ENCODE measurements at regions of chr17 and their contacts with region 1.

Region 1: GRCh38 chr17:77331301-77331864 is 190.6 kb downstream of the SEC14L1 start:
- DNase-seq: peak; percentile 92 to 95 (median 94)
- H3K4me3 ChIP-seq: peak overlapping the region; percentile 48 to 57
- H3K4me3 Mint-ChIP-seq: peak overlapping the region; percentile 80 to 90 (median 85)
- H3K27ac ChIP-seq: peak overlapping the region; percentile 43
- H3K27ac Mint-ChIP-seq: peak overlapping the region; percentile 83 to 95 (median 93)
- H3K4me1 ChIP-seq: peaks cover 52% of the 10 kb centered on the region
- H3K4me1 Mint-ChIP-seq: peaks cover 30 to 66% (median 44%) of the 10 kb centered on the region in 4 donors
- H3K27me3 ChIP-seq: no peaks in the 10 kb centered on the region
- H3K27me3 Mint-ChIP-seq: no peaks in the 10 kb centered on the region

Region 2: DNA sequence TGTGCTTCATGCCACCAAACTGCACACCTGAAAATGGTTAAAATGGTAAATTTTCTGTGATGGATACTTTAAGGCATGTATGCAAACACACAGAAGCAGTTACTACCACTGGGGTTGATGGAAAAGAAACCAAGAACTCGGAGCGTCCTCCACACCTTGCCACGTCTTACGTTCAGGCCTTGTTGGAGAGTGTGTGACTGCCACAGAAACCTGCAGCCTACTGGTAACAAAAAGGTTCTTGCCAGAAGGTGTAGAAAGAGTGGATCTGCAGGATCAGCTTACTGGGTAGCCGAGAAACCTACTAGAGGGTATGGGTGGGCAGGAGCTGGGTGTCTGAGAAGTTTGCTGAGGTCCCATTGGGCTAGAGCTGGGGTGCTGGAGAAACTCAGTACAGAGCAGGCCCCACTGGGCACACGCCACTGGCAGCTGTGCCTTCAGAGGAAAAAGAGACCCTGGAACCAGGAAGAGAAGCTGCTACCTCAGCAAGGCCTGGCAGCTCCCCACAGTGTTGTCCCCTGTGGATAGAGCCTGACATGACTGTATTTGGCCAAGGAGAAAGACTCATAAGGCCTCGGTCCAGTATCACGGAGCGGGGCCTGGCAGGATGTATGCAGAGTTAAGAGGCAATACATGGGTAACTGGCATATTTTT is 14.0 kb after region 1 on chr17:
- CTCF ChIA-PET with region 1: interaction called, 11 read pairs
- POLR2A ChIA-PET with region 1: interaction called, 54 read pairs
- intact Hi-C with region 1: loop called (anchors 1 kb)
- DNase-seq: no peak
- H3K4me3 ChIP-seq: no peak overlapping the region
- H3K4me3 Mint-ChIP-seq: peak overlapping the region in 3 of 8 donors; percentile 30 to 57 (median 35)
- H3K27ac ChIP-seq: no peak overlapping the region
- H3K27ac Mint-ChIP-seq: peak overlapping the region in 6 of 7 donors; percentile 53 to 87 (median 78)
- H3K4me1 ChIP-seq: peaks cover 58% of the 10 kb centered on the region
- H3K4me1 Mint-ChIP-seq: peaks cover 39 to 62% (median 52%) of the 10 kb centered on the region in 4 donors
- H3K27me3 ChIP-seq: no peaks in the 10 kb centered on the region
- H3K27me3 Mint-ChIP-seq: no peaks in the 10 kb centered on the region

Region 3: GRCh38 chr17:77382966-77383612 is 51.7 kb after region 1 on chr17:
- CTCF ChIA-PET with region 1: interaction called, 28 read pairs
- POLR2A ChIA-PET with region 1: interaction called, 248 read pairs
- intact Hi-C with region 1: loop called (anchors 2 kb)
- DNase-seq: no peak
- H3K4me3 ChIP-seq: peak overlapping the region in 1 of 2 donors; percentile 41
- H3K4me3 Mint-ChIP-seq: peak overlapping the region; percentile 74 to 94 (median 82)
- H3K27ac ChIP-seq: peak overlapping the region; percentile 50
- H3K27ac Mint-ChIP-seq: peak overlapping the region; percentile 82 to 95 (median 90)
- H3K4me1 ChIP-seq: peaks cover 98% of the 10 kb centered on the region
- H3K4me1 Mint-ChIP-seq: peaks cover 56 to 97% (median 84%) of the 10 kb centered on the region in 4 donors
- H3K27me3 ChIP-seq: no peaks in the 10 kb centered on the region
- H3K27me3 Mint-ChIP-seq: no peaks in the 10 kb centered on the region

Region 4: DNA sequence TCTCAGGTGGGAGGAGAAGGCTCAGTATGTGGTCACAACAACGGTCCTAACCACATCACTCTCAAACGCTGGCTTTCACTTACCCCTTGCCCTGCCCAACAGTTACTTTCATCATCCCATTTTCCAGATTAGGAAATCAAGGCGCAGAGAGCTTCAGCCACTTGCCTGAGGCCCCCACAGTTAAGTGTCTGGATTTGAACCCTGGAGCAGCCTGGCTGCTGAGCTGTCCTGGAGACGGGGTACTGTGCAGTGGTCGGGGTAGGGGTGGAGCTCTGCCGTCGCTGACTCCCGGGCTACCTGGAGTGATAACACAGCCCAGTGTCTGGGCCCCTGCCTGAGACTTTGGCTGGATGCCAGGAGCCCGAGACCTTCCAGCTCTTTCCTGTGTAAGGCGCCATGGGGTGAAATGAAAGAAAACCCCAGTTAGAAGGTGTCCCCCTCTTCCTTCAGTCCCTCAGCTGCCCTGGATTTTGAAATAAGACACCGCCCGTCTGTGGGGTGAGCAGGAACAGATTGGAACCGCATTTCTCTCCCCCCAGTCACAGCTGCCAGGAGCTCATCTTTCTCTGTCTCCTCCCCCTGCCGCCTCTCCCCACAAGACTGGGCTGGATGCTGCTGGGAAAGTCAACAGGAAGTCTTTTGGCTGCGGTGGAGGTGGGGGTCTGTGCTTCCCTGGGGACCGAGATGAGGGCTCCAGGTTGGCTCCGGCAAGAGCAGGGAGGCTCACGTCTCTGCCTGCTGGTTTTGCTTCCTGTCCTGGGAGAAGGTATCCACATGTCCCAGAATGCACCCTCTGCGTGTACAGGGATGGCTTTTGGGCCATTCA is 89.6 kb after region 1 on chr17:
- CTCF ChIA-PET with region 1: interaction called, 16 read pairs
- POLR2A ChIA-PET with region 1: interaction called, 65 read pairs
- intact Hi-C with region 1: no loop called
- DNase-seq: peak; percentile 56 to 83 (median 62)
- H3K4me3 ChIP-seq: peak overlapping the region in 1 of 2 donors; percentile 43
- H3K4me3 Mint-ChIP-seq: peak overlapping the region; percentile 72 to 84 (median 78)
- H3K27ac ChIP-seq: peak overlapping the region; percentile 64
- H3K27ac Mint-ChIP-seq: peak overlapping the region; percentile 93 to 96 (median 96)
- H3K4me1 ChIP-seq: peaks cover 98% of the 10 kb centered on the region
- H3K4me1 Mint-ChIP-seq: peaks cover 27 to 81% (median 49%) of the 10 kb centered on the region in 4 donors
- H3K27me3 ChIP-seq: no peaks in the 10 kb centered on the region
- H3K27me3 Mint-ChIP-seq: no peaks in the 10 kb centered on the region

Region 5: DNA sequence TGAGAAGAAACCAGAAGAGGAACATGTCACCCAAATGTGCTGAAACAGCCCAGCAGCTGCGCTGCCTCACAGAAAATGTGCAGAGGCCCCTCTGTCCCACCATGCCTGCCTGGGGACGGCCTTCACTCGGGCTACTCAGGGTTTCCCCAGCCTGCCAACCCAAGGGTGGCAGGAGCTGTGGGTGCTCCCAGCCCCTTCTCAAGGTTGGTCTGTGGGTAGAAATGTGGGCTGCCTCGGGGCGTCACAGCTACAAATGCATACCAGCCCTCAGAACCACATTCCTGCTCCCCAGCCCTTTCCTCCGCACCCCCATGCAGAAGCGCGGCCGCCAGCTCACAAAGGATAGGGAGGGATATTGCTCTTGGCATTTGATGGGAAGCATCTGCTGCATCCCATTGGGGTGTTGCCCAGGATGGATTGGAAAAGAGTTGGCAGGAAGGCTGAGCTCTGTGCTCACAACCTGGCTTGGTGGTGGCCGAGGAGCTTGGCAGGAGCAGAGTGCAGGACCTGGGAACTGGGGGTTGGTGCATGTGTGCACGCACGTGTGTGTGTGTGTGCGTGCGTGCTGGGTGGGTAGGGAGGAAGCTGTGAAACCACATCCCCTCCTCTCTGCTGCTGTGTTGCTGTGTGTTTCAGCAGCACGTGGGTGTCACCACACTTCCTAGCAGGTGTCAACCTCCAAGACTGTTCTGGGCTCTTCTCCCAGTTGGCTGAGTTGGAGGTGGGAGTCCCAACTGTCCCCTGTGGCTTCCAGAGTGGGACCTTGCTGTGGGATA is 113.8 kb after region 1 on chr17:
- CTCF ChIA-PET with region 1: interaction called, 14 read pairs
- POLR2A ChIA-PET with region 1: interaction called, 252 read pairs
- intact Hi-C with region 1: loop called (anchors 1 kb)
- DNase-seq: peak; percentile 92 to 95 (median 94)
- H3K4me3 ChIP-seq: peak overlapping the region; percentile 54 to 64
- H3K4me3 Mint-ChIP-seq: peak overlapping the region; percentile 73 to 89 (median 86)
- H3K27ac ChIP-seq: peak overlapping the region; percentile 90
- H3K27ac Mint-ChIP-seq: peak overlapping the region; percentile 90 to 99 (median 99)
- H3K4me1 ChIP-seq: peaks cover 100% of the 10 kb centered on the region
- H3K4me1 Mint-ChIP-seq: peaks cover 65 to 99% (median 89%) of the 10 kb centered on the region in 4 donors
- H3K27me3 ChIP-seq: no peaks in the 10 kb centered on the region
- H3K27me3 Mint-ChIP-seq: no peaks in the 10 kb centered on the region

Region 6: GRCh38 chr17:77471984-77472461 is 140.6 kb after region 1 on chr17:
- CTCF ChIA-PET with region 1: interaction called, 14 read pairs
- POLR2A ChIA-PET with region 1: interaction called, 252 read pairs
- intact Hi-C with region 1: no loop called
- DNase-seq: peak in 1 of 5 donors; percentile 34
- H3K4me3 ChIP-seq: peak overlapping the region; percentile 18 to 48
- H3K4me3 Mint-ChIP-seq: peak overlapping the region; percentile 43 to 91 (median 74)
- H3K27ac ChIP-seq: peak overlapping the region; percentile 51
- H3K27ac Mint-ChIP-seq: peak overlapping the region; percentile 82 to 98 (median 93)
- H3K4me1 ChIP-seq: peaks cover 100% of the 10 kb centered on the region
- H3K4me1 Mint-ChIP-seq: peaks cover 67 to 99% (median 90%) of the 10 kb centered on the region in 4 donors
- H3K27me3 ChIP-seq: no peaks in the 10 kb centered on the region
- H3K27me3 Mint-ChIP-seq: no peaks in the 10 kb centered on the region

Measured in CD4-positive, alpha-beta memory T cell (primary cell).